OCI-LY7 (cell line): ENCODE measurements at regions of chr6 and their contacts with region 1.

Region 1: GRCh38 chr6:3052481-3053230 is 15.6 kb upstream of the RIPK1 start:
- DNase-seq: no peak
- H3K4me3 ChIP-seq: peak overlapping the region; percentile 68
- H3K27ac ChIP-seq: no peak overlapping the region
- H3K4me1 ChIP-seq: peaks cover 22% of the 10 kb centered on the region
- CTCF ChIP-seq: no peak

Region 2: GRCh38 chr6:3023663-3024483 is 28.8 kb before region 1 on chr6:
- CTCF ChIA-PET with region 1: interaction called, 8 read pairs
- POLR2A ChIA-PET with region 1: interaction called, 10 read pairs
- intact Hi-C with region 1: loop called (anchors 1 kb)
- DNase-seq: peak; percentile 88
- H3K4me3 ChIP-seq: peak overlapping the region; percentile 61
- H3K27ac ChIP-seq: peak overlapping the region; percentile 95
- H3K4me1 ChIP-seq: peaks cover 62% of the 10 kb centered on the region
- CTCF ChIP-seq: no peak

Region 3: DNA sequence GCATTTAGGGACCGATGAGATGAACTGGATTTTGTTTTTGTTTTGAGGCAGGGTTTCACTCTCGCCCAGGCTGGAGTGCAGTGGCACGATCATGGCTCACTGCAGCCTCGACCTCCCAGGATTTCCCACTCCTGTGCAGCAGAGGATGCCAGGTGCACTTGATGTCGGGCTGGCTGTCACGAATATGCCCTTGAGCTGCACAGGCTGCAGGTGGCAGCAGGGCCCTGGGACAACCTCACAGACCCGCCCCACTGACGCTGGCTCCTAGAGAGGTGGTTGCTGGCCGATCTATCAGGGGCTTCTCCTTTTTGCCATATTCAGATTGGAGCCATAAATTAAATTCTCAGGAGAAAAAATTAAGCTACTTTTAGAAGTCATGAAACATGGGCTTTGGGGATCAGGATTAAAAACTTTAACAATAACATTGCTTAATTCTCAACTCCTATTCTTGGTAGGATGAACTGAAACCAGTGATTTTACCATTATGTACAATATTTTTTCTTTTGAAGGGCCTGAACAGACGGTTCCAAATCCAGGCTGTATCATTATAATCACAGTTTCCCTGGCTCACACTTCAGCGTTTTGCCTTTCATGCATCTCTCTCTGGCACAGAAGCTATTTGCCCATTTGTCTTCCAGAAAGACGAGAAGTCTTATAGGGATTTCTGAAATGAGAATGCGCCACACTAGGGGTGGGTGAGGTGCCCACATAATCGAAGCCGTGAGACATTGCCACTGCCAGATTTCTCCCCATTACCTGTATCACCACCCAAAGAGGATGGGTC is 20.6 kb before region 1 on chr6:
- CTCF ChIA-PET with region 1: interaction called, 6 read pairs
- POLR2A ChIA-PET with region 1: interaction called, 10 read pairs
- intact Hi-C with region 1: loop called (anchors 1 kb)
- DNase-seq: peak; percentile 80
- H3K4me3 ChIP-seq: peak overlapping the region; percentile 6
- H3K27ac ChIP-seq: no peak overlapping the region
- H3K4me1 ChIP-seq: peaks cover 32% of the 10 kb centered on the region
- CTCF ChIP-seq: peak; percentile 77

Region 4: GRCh38 chr6:3108746-3109414 is 56.2 kb after region 1 on chr6:
- CTCF ChIA-PET with region 1: no interaction called
- POLR2A ChIA-PET with region 1: no interaction called
- intact Hi-C with region 1: no loop called
- DNase-seq: no peak
- H3K4me3 ChIP-seq: no peak overlapping the region
- H3K27ac ChIP-seq: no peak overlapping the region
- H3K4me1 ChIP-seq: no peaks in the 10 kb centered on the region
- CTCF ChIP-seq: no peak

Region 5: DNA sequence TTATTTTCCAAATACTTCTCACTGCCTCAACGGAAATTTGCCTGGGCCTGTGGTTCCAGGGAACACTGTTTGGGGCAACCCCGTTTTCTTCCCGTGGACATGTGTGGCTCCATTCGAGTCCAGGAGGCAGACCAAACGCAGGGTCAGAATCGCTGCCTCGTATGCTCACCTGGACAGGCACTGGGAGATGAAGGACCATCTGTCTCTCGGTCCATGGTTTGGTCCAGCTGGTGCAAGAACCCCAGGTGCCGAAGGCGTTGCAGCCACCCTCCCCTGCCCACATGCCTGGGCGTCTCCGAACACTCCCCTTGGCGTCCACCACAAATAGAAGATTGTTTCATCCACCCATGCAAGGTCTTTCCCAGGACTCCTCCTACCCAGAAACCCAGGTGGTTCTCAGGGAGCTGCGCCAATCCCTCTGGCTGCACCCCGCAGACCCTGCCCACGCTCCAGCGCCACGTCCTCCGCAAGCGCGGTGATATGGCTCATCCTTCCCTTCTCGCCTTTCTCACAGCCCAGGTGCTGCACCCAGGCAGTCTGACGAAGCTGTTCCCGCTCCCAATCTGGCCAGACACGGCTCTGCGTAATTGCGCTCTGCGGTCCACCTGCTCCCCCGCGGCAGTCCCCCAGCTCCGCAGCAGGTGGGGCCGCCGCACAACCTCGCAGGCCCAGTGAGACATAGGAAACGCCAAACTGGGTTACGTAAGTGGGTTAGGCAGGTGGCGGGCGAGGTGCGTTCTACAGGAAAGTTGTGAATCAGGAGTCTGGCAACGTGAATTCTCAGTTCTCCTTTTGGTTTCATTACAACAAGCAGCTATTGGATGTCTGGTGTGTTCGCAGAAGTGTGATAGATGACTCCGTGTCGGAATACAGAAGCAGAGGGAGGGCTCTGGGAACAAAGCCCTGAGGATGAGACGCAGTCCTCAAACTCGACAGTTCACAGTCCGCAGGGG is 1229.0 kb after region 1 on chr6:
- CTCF ChIA-PET with region 1: no interaction called
- POLR2A ChIA-PET with region 1: no interaction called
- intact Hi-C with region 1: no loop called
- DNase-seq: peak; percentile 2
- H3K4me3 ChIP-seq: no peak overlapping the region
- H3K27ac ChIP-seq: no peak overlapping the region
- H3K4me1 ChIP-seq: no peaks in the 10 kb centered on the region
- CTCF ChIP-seq: no peak